Natural killer cell (primary cell): ENCODE measurements at regions of chr15 and their contacts with region 1.

Region 1: GRCh38 chr15:39782441-39783138 is at the start of gene FSIP1:
- DNase-seq: peak; percentile 97 to 98
- ATAC-seq: peak; percentile 97 to 100 (median 98)
- H3K4me3 ChIP-seq: peak within 1 kb of the TSS; percentile 73
- H3K4me3 Mint-ChIP-seq: peak within 1 kb of the TSS; percentile 77
- H3K27ac ChIP-seq: peak within 1 kb of the TSS; percentile 71
- H3K27ac Mint-ChIP-seq: peak within 1 kb of the TSS; percentile 84 to 93
- H3K4me1 ChIP-seq: peaks cover 3% of the 10 kb centered on the region
- H3K4me1 Mint-ChIP-seq: peaks cover 33 to 36% of the 10 kb centered on the region in 2 donors
- H3K27me3 ChIP-seq: no peaks in the 10 kb centered on the region
- H3K27me3 Mint-ChIP-seq: peaks cover 0 to 13% of the 10 kb centered on the region in 2 donors
- CTCF ChIP-seq: no peak
- total RNA-seq, gene FSIP1: 1.1 to 2.3 (median 1.8) TPM

Region 2: GRCh38 chr15:39801641-39802309 is 19.2 kb after region 1 on chr15:
- intact Hi-C with region 1: no loop called
- DNase-seq: peak in 1 of 2 donors; percentile 32
- ATAC-seq: no peak
- H3K4me3 ChIP-seq: no peak overlapping the region
- H3K4me3 Mint-ChIP-seq: no peak overlapping the region
- H3K27ac ChIP-seq: no peak overlapping the region
- H3K27ac Mint-ChIP-seq: no peak overlapping the region
- H3K4me1 ChIP-seq: no peaks in the 10 kb centered on the region
- H3K4me1 Mint-ChIP-seq: no peaks in the 10 kb centered on the region
- H3K27me3 ChIP-seq: no peaks in the 10 kb centered on the region
- H3K27me3 Mint-ChIP-seq: peaks cover 17 to 55% of the 10 kb centered on the region in 2 donors
- CTCF ChIP-seq: no peak

Region 3: DNA sequence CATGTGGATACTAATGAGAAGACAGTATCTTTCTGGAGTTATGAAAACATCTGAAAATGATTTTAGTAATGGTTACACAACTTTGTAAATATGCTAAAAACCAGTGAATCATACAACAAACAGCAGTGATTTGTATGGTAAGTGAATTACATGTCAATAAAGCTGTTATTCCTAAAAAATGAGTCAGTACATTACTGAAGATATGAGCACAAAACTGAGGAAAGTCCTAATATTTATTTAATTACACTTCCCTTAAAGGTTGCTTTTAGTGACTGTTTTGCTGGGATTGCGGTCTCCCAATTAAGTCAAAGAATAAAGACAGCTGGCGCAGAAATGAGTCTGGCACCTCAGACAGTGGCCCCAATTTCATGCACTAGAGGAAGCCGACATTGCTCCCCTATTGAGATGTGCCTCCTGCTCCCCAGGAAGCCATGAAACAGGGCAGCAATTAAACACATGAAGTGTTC is 51.0 kb after region 1 on chr15:
- intact Hi-C with region 1: no loop called
- DNase-seq: no peak
- ATAC-seq: no peak
- H3K4me3 ChIP-seq: no peak overlapping the region
- H3K4me3 Mint-ChIP-seq: no peak overlapping the region
- H3K27ac ChIP-seq: no peak overlapping the region
- H3K27ac Mint-ChIP-seq: no peak overlapping the region
- H3K4me1 ChIP-seq: no peaks in the 10 kb centered on the region
- H3K4me1 Mint-ChIP-seq: no peaks in the 10 kb centered on the region
- H3K27me3 ChIP-seq: peaks cover 6% of the 10 kb centered on the region
- H3K27me3 Mint-ChIP-seq: peaks cover 31 to 44% of the 10 kb centered on the region in 2 donors
- CTCF ChIP-seq: no peak

Region 4: DNA sequence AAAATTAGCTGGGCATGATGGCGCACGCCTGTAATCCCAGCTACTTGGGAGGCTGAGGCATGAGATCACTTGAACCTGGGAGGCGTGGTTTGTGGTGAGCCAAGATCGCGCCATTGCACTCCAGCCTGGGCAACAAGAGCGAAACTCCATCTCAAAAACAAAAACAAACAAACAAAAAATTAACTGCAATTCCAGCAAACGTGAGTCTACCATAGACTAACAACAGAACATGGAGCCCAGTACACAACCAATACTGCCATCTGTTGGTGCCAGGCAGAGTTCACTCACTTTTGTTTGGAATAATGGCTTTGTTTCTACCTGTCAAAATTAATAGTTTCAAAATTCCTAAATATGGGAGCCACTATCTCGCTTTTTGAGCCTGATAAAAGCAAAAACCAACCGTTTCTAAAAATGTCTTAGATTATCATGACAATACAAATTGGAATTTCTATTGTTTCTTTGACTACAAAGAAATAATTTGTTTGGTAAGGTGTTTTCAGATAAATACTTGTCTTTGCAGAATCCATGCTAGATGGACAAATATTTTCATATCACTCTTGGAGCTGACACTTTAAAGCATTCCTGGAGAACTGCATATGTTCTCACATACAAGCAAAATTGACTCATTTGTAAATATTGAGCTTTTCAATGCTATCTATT is 92.4 kb after region 1 on chr15:
- intact Hi-C with region 1: loop called (anchors 2 kb)
- DNase-seq: peak in 1 of 2 donors; percentile 55
- ATAC-seq: peak in 2 of 3 donors; percentile 50 to 52
- H3K4me3 ChIP-seq: no peak overlapping the region
- H3K4me3 Mint-ChIP-seq: no peak overlapping the region
- H3K27ac ChIP-seq: no peak overlapping the region
- H3K27ac Mint-ChIP-seq: no peak overlapping the region
- H3K4me1 ChIP-seq: no peaks in the 10 kb centered on the region
- H3K4me1 Mint-ChIP-seq: no peaks in the 10 kb centered on the region
- H3K27me3 ChIP-seq: no peaks in the 10 kb centered on the region
- H3K27me3 Mint-ChIP-seq: peaks cover 8 to 12% of the 10 kb centered on the region in 2 donors
- CTCF ChIP-seq: peak; percentile 40

Region 5: DNA sequence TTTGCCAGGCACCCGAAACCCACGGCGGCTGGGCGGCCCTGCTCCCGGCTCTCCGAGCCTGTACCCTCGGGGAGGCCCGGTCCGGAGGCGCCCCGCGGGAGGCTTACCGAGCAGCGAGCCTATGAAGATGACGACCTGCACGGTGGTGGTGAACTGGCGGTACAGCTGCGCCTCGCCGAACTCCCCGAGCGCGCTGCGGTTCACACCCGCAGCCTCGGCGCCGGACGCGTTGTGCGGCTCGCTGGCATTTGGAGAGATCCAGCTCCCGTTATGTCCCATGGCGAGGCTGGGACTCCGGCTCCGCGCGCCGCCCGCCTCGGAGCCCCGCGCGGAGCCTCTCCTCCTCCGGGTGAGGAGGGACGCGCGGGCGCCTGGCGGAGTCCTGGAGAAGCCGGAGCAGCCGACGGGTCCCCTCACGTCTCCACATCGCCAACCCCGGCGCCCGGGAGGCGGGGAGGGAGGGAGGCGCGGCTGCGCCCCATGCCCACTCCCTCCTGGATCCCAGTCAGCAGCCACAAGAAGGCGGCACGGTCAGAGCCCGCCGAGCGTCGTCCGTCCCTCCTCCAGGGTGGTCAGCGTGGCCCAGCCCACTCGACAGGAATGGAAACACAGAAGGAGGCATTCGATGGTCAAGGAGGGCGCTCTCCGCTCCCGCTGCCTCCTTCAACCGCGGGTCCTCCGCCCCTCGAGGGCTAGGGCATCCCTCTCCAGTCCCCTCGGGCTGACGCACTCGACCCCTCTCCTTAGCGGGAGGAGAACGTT is 137.3 kb after region 1 on chr15 and contains the start of gene GPR176:
- intact Hi-C with region 1: loop called (anchors 5 kb)
- DNase-seq: peak; percentile 41 to 57
- ATAC-seq: peak; percentile 27 to 46 (median 33)
- H3K4me3 ChIP-seq: peak within 1 kb of the TSS; percentile 59
- H3K4me3 Mint-ChIP-seq: peak within 1 kb of the TSS; percentile 89
- H3K27ac ChIP-seq: no peak within 1 kb of the TSS
- H3K27ac Mint-ChIP-seq: peak within 1 kb of the TSS in 1 of 2 donors; percentile 78
- H3K4me1 ChIP-seq: peaks cover 18% of the 10 kb centered on the region
- H3K4me1 Mint-ChIP-seq: peaks cover 6 to 7% of the 10 kb centered on the region in 2 donors
- H3K27me3 ChIP-seq: peaks cover 38% of the 10 kb centered on the region
- H3K27me3 Mint-ChIP-seq: peaks cover 19 to 23% of the 10 kb centered on the region in 2 donors
- CTCF ChIP-seq: no peak
- total RNA-seq, gene GPR176: 0.38 TPM in 1 of 3 donors, not detected in the others

Region 6: GRCh38 chr15:40038638-40039543 is 256.3 kb after region 1 on chr15 and contains the start of gene SRP14:
- intact Hi-C with region 1: loop called (anchors 10 kb)
- DNase-seq: peak; percentile 87 to 96
- ATAC-seq: peak; percentile 94 to 98 (median 96)
- H3K4me3 ChIP-seq: peak within 1 kb of the TSS; percentile 93
- H3K4me3 Mint-ChIP-seq: peak within 1 kb of the TSS; percentile 99
- H3K27ac ChIP-seq: peak within 1 kb of the TSS; percentile 93
- H3K27ac Mint-ChIP-seq: peak within 1 kb of the TSS; percentile 96 to 99
- H3K4me1 ChIP-seq: peaks cover 18% of the 10 kb centered on the region
- H3K4me1 Mint-ChIP-seq: peaks cover 35 to 45% of the 10 kb centered on the region in 2 donors
- H3K27me3 ChIP-seq: no peaks in the 10 kb centered on the region
- H3K27me3 Mint-ChIP-seq: no peaks in the 10 kb centered on the region
- CTCF ChIP-seq: no peak
- total RNA-seq, gene SRP14: 126 to 143 (median 127) TPM

Region 7: GRCh38 chr15:40217159-40217824 is 434.7 kb after region 1 on chr15:
- intact Hi-C with region 1: loop called (anchors 2 kb)
- DNase-seq: peak in 1 of 2 donors; percentile 87
- ATAC-seq: peak; percentile 93 to 99 (median 99)
- H3K4me3 ChIP-seq: no peak overlapping the region
- H3K4me3 Mint-ChIP-seq: no peak overlapping the region
- H3K27ac ChIP-seq: no peak overlapping the region
- H3K27ac Mint-ChIP-seq: no peak overlapping the region
- H3K4me1 ChIP-seq: no peaks in the 10 kb centered on the region
- H3K4me1 Mint-ChIP-seq: peaks cover 0 to 7% of the 10 kb centered on the region in 2 donors
- H3K27me3 ChIP-seq: no peaks in the 10 kb centered on the region
- H3K27me3 Mint-ChIP-seq: no peaks in the 10 kb centered on the region
- CTCF ChIP-seq: peak; percentile 93